Aorta (tissue), 5 donors: ENCODE measurements at regions of chr2 and their contacts with region 1.

Region 1: GRCh38 chr2:165582409-165582808 is 112.9 kb downstream of the CSRNP3 start:
- DNase-seq: peak in 1 of 2 donors; percentile 53
- ATAC-seq: peak; percentile 46
- H3K4me3 ChIP-seq: no peak overlapping the region
- H3K27ac ChIP-seq: no peak overlapping the region
- H3K4me1 ChIP-seq: peaks cover 0 to 5% of the 10 kb centered on the region in 2 donors
- H3K27me3 ChIP-seq: no peaks in the 10 kb centered on the region

Region 2: DNA sequence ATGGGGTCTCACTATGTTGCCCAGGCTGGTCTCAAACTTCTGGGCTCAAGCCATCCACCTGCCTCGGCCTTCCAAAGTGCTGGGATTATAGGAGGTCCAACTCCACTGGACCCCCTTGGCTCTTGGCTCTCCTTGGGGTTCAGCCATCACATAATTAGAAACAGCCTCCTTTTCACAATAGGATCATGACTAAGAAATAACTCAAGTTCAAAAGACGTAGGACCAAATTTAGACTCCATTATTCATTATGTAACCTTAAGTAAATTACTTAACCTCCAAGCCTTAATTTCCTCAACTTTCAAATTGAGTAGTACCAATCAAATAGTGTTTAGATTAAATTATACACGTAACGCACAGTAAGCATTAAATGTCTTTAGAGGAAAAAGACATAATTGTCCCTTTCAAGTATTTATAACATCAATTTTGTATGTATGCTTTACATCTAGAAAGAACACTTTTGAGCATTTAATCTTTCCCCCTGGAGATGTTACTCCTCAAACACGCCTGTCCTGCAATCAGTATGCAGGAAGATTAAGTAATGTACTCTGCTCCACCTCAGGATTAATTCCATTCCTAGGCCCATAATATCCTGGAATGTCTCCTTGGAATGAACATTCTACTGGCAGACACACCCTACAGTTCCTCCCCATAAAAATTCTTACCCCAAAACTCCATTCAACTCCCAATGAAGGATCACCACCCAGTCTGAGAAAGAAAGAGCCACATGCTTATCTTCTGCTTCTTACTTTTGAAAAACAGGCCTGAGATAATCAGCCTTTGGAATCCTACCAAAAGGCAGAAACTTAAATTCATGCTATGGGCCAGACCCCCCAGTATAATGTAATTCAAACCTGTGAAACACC is 789.9 kb before region 1 on chr2:
- intact Hi-C with region 1: no loop called
- DNase-seq: no peak
- ATAC-seq: no peak
- H3K4me3 ChIP-seq: no peak overlapping the region
- H3K27ac ChIP-seq: peak overlapping the region; percentile 57 to 67
- H3K4me1 ChIP-seq: peaks cover 6 to 24% of the 10 kb centered on the region in 2 donors
- H3K27me3 ChIP-seq: no peaks in the 10 kb centered on the region

Region 3: DNA sequence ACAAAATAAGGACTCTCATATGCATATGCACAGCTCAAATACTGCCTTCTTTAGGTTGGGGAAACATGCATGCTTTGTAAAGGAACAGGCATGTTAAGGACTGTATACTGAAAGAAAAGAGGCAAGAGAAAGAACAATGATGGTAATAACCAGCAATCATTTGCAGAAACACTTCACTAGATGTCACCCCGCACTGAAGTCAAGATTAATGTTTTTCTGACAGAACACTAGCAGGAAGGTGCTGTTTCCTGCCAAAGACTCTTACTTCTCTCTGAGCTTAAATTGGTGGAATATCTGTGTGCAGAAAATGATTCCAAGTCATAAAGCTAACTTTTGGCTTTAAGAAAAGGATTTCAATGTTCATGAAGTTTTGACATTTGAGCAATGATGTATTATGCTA is 132.3 kb before region 1 on chr2:
- intact Hi-C with region 1: no loop called
- DNase-seq: no peak
- ATAC-seq: no peak
- H3K4me3 ChIP-seq: no peak overlapping the region
- H3K27ac ChIP-seq: no peak overlapping the region
- H3K4me1 ChIP-seq: no peaks in the 10 kb centered on the region
- H3K27me3 ChIP-seq: no peaks in the 10 kb centered on the region

Region 4: GRCh38 chr2:165681841-165682240 is 99.4 kb after region 1 on chr2:
- intact Hi-C with region 1: loop called in 1 of 2 experiments (anchors 5 kb)
- DNase-seq: no peak
- ATAC-seq: peak; percentile 86
- H3K4me3 ChIP-seq: no peak overlapping the region
- H3K27ac ChIP-seq: peak overlapping the region in 1 of 2 donors; percentile 82
- H3K4me1 ChIP-seq: peaks cover 4% of the 10 kb centered on the region in 2 donors
- H3K27me3 ChIP-seq: no peaks in the 10 kb centered on the region

Region 5: GRCh38 chr2:165911231-165911630 is 328.8 kb after region 1 on chr2:
- intact Hi-C with region 1: no loop called
- DNase-seq: no peak
- ATAC-seq: no peak
- H3K4me3 ChIP-seq: no peak overlapping the region
- H3K27ac ChIP-seq: no peak overlapping the region
- H3K4me1 ChIP-seq: no peaks in the 10 kb centered on the region
- H3K27me3 ChIP-seq: no peaks in the 10 kb centered on the region

Region 6: DNA sequence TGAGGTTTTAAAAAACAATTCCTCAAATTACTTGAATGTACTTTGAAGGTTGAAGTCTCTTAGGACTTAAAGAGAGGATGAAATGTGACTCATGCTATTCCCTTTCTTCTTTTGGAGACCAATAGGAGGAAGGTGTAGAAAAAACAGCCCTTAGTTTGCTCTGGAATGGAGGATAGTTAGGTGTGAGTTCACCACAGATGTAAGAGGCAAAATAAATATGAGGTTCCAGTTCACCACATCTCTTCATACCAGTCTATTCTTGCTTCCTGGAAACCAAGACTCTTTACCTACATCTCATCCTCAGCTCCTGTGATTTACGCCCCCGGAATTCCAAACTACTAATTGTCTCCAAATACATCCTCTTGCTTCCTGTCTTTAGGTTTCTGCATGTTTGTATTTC is 448.6 kb after region 1 on chr2:
- intact Hi-C with region 1: no loop called
- DNase-seq: no peak
- ATAC-seq: no peak
- H3K4me3 ChIP-seq: no peak overlapping the region
- H3K27ac ChIP-seq: no peak overlapping the region
- H3K4me1 ChIP-seq: no peaks in the 10 kb centered on the region
- H3K27me3 ChIP-seq: no peaks in the 10 kb centered on the region